Activated CD8-positive, alpha-beta T cell treated with anti-CD3 and anti-CD28 coated beads for 36 hours (primary cell): ENCODE measurements at regions of chr3 and their contacts with region 1.

Region 1: DNA sequence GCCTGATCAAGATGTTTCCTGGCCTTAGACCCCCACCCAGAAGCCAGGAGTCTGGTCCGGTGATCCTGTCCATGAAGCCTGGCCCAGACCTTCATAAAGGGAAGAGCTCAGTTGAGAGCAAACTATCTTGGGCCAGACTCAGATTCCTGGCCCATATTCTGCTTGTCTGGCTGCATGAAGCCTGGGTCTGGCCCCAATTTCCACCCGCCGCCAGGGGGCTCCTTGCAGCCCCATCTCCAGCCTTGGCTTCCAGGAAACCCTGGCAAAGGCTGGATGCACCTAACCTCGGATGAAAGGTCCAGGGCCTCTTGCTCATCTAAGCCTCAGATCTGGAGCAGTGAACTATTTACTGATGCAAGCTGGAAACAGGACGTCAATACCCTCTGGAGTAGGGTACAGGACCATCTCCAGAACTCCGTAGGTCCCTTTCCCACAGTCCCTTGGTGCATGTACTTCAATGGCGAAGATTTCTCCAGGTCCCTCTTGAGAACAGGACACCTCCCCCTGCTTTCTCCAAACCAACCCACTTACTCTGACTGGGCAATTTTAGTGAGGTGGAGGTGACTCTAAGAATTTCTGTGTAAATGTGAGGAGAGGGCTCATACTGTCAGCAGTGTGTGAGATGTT is 5.6 kb downstream of the FOXL2 start:
- DNase-seq: peak; percentile 58
- ATAC-seq: no peak
- H3K4me3 Mint-ChIP-seq: no peak overlapping the region
- H3K27ac Mint-ChIP-seq: no peak overlapping the region
- H3K4me1 Mint-ChIP-seq: peaks cover 44% of the 10 kb centered on the region
- H3K27me3 Mint-ChIP-seq: peaks cover 80% of the 10 kb centered on the region
- CTCF ChIP-seq: peak; percentile 35

Region 2: GRCh38 chr3:137770835-137771399 is 1170.5 kb before region 1 on chr3:
- CTCF ChIA-PET with region 1: no interaction called
- POLR2A ChIA-PET with region 1: no interaction called
- intact Hi-C with region 1: loop called (anchors 10 kb)
- DNase-seq: no peak
- ATAC-seq: no peak
- H3K4me3 Mint-ChIP-seq: no peak overlapping the region
- H3K27ac Mint-ChIP-seq: no peak overlapping the region
- H3K4me1 Mint-ChIP-seq: peaks cover 4% of the 10 kb centered on the region
- H3K27me3 Mint-ChIP-seq: peaks cover 73% of the 10 kb centered on the region
- CTCF ChIP-seq: no peak

Region 3: DNA sequence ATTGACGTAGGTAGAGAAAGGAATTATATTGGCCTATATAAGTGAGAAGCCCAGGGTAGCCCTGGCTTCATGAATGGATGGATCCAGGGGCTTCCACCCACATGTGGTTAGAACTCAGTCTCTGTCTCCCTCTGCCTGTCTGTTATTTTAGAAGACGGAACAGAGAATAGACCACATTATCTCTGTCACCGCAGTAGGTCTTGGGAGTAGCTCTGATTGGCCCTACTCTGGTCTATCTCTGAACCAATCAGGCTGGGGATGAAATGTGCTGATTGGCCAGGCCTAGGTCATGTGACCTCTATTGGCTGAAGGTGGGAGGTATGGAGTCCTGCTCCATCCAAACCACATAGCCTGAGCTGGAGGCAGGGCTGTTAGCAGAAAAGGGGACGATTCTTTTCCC is 246.3 kb after region 1 on chr3:
- CTCF ChIA-PET with region 1: no interaction called
- POLR2A ChIA-PET with region 1: no interaction called
- intact Hi-C with region 1: no loop called
- DNase-seq: no peak
- ATAC-seq: no peak
- H3K4me3 Mint-ChIP-seq: no peak overlapping the region
- H3K27ac Mint-ChIP-seq: no peak overlapping the region
- H3K4me1 Mint-ChIP-seq: no peaks in the 10 kb centered on the region
- H3K27me3 Mint-ChIP-seq: peaks cover 7% of the 10 kb centered on the region
- CTCF ChIP-seq: no peak